Activated CD4-positive, alpha-beta T cell treated with anti-CD3 and anti-CD28 coated beads for 36 hours (primary cell): ENCODE measurements at regions of chr9 and their contacts with region 1.

Region 1: GRCh38 chr9:136488247-136489214 is 5.7 kb upstream of the SEC16A start:
- DNase-seq: peak; percentile 86
- ATAC-seq: peak; percentile 46
- H3K4me3 Mint-ChIP-seq: no peak overlapping the region
- H3K27ac Mint-ChIP-seq: no peak overlapping the region
- H3K4me1 Mint-ChIP-seq: peaks cover 4% of the 10 kb centered on the region
- H3K27me3 Mint-ChIP-seq: no peaks in the 10 kb centered on the region

Region 2: GRCh38 chr9:136474974-136475865 is 13.3 kb before region 1 on chr9:
- CTCF ChIA-PET with region 1: no interaction called
- POLR2A ChIA-PET with region 1: no interaction called
- intact Hi-C with region 1: no loop called
- DNase-seq: no peak
- ATAC-seq: no peak
- H3K4me3 Mint-ChIP-seq: no peak overlapping the region
- H3K27ac Mint-ChIP-seq: no peak overlapping the region
- H3K4me1 Mint-ChIP-seq: peaks cover 14% of the 10 kb centered on the region
- H3K27me3 Mint-ChIP-seq: no peaks in the 10 kb centered on the region

Region 3: GRCh38 chr9:136539427-136540421 is 51.2 kb after region 1 on chr9:
- CTCF ChIA-PET with region 1: interaction called, 14 read pairs
- POLR2A ChIA-PET with region 1: no interaction called
- intact Hi-C with region 1: loop called (anchors 1 to 2 kb)
- DNase-seq: peak; percentile 99
- ATAC-seq: peak; percentile 81
- H3K4me3 Mint-ChIP-seq: peak overlapping the region; percentile 65
- H3K27ac Mint-ChIP-seq: peak overlapping the region; percentile 99
- H3K4me1 Mint-ChIP-seq: peaks cover 74% of the 10 kb centered on the region
- H3K27me3 Mint-ChIP-seq: no peaks in the 10 kb centered on the region

Region 4: DNA sequence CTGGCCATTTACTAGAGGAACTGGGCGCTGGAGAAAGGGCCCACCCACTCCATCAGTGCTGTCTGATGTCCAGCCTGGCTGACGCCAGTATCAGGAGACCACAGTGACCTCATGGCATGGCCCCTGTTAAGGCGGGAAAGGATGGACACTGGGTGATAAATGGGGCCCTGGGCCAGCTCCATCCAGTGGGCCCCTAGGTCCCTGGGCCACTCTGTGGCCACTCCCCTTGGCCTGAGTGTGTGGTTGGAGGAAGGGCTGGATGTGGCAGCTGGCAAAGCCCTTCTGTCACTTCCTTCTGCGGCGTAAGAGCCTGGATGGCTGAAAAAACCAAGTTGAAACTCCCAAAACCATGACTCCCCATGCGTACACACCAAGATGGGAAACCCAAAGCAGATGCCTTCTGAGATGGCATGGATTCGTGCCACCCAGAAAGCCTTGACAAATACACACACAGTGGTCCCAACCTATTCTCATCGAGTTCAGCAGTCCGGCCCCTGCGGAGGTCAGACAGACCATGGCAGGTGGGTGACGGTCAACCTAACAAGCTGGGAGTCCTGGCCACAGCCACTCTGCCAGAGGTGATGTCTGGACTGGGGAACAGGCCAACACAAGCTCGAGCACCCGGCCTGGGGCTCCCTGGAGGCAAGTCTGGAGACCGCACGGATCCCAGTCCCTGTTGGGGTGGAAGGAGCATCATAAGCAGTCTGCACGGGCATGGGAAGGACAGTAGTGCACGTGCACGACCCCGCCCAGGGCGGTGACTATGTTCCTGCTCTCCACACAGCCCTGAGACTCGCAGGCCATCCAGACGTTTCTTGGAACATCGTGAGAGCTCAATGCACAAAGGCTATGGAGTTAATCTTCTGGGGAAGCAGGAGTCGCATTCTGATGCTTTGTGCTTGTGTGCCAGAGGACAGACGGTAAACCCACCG is 102.6 kb after region 1 on chr9:
- CTCF ChIA-PET with region 1: no interaction called
- POLR2A ChIA-PET with region 1: no interaction called
- intact Hi-C with region 1: no loop called
- DNase-seq: no peak
- ATAC-seq: no peak
- H3K4me3 Mint-ChIP-seq: no peak overlapping the region
- H3K27ac Mint-ChIP-seq: no peak overlapping the region
- H3K4me1 Mint-ChIP-seq: peaks cover 12% of the 10 kb centered on the region
- H3K27me3 Mint-ChIP-seq: no peaks in the 10 kb centered on the region

Region 5: GRCh38 chr9:136631038-136632000 is 142.8 kb after region 1 on chr9:
- CTCF ChIA-PET with region 1: interaction called, 61 read pairs
- POLR2A ChIA-PET with region 1: no interaction called
- intact Hi-C with region 1: loop called (anchors 1 kb)
- DNase-seq: peak; percentile 85
- ATAC-seq: peak; percentile 89
- H3K4me3 Mint-ChIP-seq: no peak overlapping the region
- H3K27ac Mint-ChIP-seq: no peak overlapping the region
- H3K4me1 Mint-ChIP-seq: no peaks in the 10 kb centered on the region
- H3K27me3 Mint-ChIP-seq: no peaks in the 10 kb centered on the region